HepG2 (cell line): ENCODE measurements at regions of chr15 and their contacts with region 1.

Region 1: GRCh38 chr15:63466378-63467192 is 37.8 kb upstream of the USP3 start:
- DNase-seq: peak; percentile 66
- ATAC-seq: peak; percentile 87
- H3K4me3 ChIP-seq: peak overlapping the region in 1 of 3 experiments; percentile 44; a peak in 2 of 6 replicates
- H3K27ac ChIP-seq: peak overlapping the region; percentile 33
- H3K4me1 ChIP-seq: peaks cover 70% of the 10 kb centered on the region
- H3K27me3 ChIP-seq: no peaks in the 10 kb centered on the region
- CTCF ChIP-seq: peak; percentile 89
- EP300 ChIP-seq: peak in 1 of 2 experiments; percentile 78; a peak in 2 of 4 replicates
- POLR2A ChIP-seq: no peak
- RAD21 ChIP-seq: peak; percentile 60

Region 2: GRCh38 chr15:63593705-63594671 is 127.4 kb after region 1 on chr15:
- CTCF ChIA-PET with region 1: interaction called, 4 read pairs
- POLR2A ChIA-PET with region 1: interaction called, 10 read pairs
- in situ Hi-C with region 1: loop called (anchors 5 kb)
- intact Hi-C with region 1: loop called (anchors 5 kb)
- DNase-seq: no peak
- ATAC-seq: no peak
- H3K4me3 ChIP-seq: no peak overlapping the region
- H3K27ac ChIP-seq: no peak overlapping the region
- H3K4me1 ChIP-seq: peaks cover 38% of the 10 kb centered on the region
- H3K27me3 ChIP-seq: no peaks in the 10 kb centered on the region
- CTCF ChIP-seq: no peak
- EP300 ChIP-seq: no peak
- POLR2A ChIP-seq: 0 out of 4 replicates have a peak, but pooled peaks of 1 of the 2 experiments have one; percentile 22
- RAD21 ChIP-seq: no peak

Region 3: DNA sequence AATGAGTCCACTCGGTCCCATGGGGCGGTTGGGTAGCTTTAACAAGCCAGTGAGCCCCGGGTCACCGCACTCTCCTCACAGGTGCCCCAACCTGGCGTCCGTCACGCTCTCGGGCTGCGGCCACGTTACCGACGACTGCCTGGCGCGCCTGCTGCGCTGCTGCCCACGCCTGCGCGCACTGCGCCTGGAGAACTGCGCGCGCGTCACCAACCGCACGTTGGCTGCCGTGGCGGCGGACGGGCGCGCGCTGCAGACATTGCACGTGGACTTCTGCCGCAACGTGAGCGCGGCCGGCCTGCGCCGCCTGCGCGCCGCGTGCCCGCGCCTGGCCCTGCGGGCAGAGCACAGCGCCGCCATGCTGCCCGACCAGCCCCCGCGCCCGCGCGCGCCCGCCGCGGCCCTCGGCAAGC is 134.0 kb after region 1 on chr15:
- CTCF ChIA-PET with region 1: interaction called, 4 read pairs
- POLR2A ChIA-PET with region 1: interaction called, 10 read pairs
- in situ Hi-C with region 1: no loop called
- intact Hi-C with region 1: loop called (anchors 5 kb)
- DNase-seq: peak; percentile 78
- ATAC-seq: peak; percentile 75
- H3K4me3 ChIP-seq: peak overlapping the region; percentile 61 to 88 (median 79)
- H3K27ac ChIP-seq: peak overlapping the region; percentile 83
- H3K4me1 ChIP-seq: peaks cover 41% of the 10 kb centered on the region
- H3K27me3 ChIP-seq: no peaks in the 10 kb centered on the region; a peak in 1 of 5 replicates
- CTCF ChIP-seq: peak; percentile 13; the same call in 1 of the 2 replicates
- EP300 ChIP-seq: no peak
- POLR2A ChIP-seq: peak in 1 of 2 experiments; percentile 87; a peak in 2 of 4 replicates
- RAD21 ChIP-seq: peak; percentile 53; the same call in 1 of the 2 replicates